Mammary epithelial cell (primary cell): ENCODE measurements at regions of chr7 and their contacts with region 1.

Region 1: GRCh38 chr7:66628361-66629140 is at the start of gene KCTD7:
- DNase-seq: peak; percentile 99
- H3K4me3 ChIP-seq: peak within 1 kb of the TSS; percentile 72 to 85 (median 76)
- H3K27ac ChIP-seq: peak within 1 kb of the TSS; percentile 82
- H3K4me1 ChIP-seq: no peaks in the 10 kb centered on the region
- H3K27me3 ChIP-seq: no peaks in the 10 kb centered on the region
- CTCF ChIP-seq: no peak
- total RNA-seq, gene KCTD7: 3.6 to 7.3 TPM

Region 2: GRCh38 chr7:66505531-66506451 is 122.8 kb before region 1 on chr7:
- CTCF ChIA-PET with region 1: no interaction called
- dilution Hi-C with region 1: no loop called
- in situ Hi-C with region 1: no loop called
- intact Hi-C with region 1: no loop called
- DNase-seq: no peak
- H3K4me3 ChIP-seq: peak overlapping the region in 1 of 3 experiments; percentile 22
- H3K27ac ChIP-seq: no peak overlapping the region
- H3K4me1 ChIP-seq: no peaks in the 10 kb centered on the region
- H3K27me3 ChIP-seq: no peaks in the 10 kb centered on the region
- CTCF ChIP-seq: no peak

Region 3: DNA sequence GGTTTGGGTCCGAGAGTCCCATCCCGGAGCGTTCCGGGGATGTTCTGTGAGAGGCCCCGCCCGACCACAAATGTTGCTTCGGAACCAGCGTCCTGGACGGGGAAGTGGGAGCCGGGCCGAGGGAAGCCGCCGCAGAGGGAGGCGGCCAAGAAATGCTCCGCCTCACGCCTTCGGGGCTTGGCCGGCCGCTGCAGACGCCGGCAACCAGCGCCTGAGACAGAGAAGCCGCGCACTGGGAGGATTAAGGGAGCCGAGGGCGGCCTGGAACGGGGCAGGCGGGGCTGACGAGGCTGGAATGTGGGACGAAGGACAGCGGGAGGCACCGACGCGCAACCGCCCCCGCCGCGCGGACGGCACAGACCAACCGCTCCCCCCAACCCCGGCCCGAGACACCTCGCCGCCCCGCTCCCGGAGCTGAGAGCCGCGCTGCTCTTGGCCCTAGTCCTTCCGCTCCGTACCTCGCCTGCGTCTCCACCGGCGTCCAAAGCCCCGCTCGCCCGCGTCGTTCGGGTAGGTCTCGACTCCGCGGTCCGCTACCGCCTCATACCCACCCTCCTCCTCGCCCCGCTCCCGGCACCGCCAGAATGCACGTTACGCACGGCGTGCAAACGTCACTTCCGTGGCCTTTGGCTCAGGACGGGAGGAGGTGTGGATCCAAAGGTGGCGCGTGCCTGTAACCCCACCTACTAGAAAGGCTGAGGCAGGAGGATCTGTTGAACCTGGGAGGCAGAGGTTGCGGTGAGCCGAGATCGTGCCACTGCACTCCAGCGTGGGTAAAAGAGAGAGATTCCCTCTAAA is 36.6 kb before region 1 on chr7:
- CTCF ChIA-PET with region 1: no interaction called
- dilution Hi-C with region 1: no loop called
- in situ Hi-C with region 1: no loop called
- intact Hi-C with region 1: loop called (anchors 2 kb)
- DNase-seq: peak; percentile 91
- H3K4me3 ChIP-seq: peak overlapping the region; percentile 71 to 96 (median 94)
- H3K27ac ChIP-seq: peak overlapping the region; percentile 92
- H3K4me1 ChIP-seq: peaks cover 16% of the 10 kb centered on the region
- H3K27me3 ChIP-seq: no peaks in the 10 kb centered on the region
- CTCF ChIP-seq: no peak